ENCODE measurements at regions of chr17 and their contacts with region 1.

Region 1: DNA sequence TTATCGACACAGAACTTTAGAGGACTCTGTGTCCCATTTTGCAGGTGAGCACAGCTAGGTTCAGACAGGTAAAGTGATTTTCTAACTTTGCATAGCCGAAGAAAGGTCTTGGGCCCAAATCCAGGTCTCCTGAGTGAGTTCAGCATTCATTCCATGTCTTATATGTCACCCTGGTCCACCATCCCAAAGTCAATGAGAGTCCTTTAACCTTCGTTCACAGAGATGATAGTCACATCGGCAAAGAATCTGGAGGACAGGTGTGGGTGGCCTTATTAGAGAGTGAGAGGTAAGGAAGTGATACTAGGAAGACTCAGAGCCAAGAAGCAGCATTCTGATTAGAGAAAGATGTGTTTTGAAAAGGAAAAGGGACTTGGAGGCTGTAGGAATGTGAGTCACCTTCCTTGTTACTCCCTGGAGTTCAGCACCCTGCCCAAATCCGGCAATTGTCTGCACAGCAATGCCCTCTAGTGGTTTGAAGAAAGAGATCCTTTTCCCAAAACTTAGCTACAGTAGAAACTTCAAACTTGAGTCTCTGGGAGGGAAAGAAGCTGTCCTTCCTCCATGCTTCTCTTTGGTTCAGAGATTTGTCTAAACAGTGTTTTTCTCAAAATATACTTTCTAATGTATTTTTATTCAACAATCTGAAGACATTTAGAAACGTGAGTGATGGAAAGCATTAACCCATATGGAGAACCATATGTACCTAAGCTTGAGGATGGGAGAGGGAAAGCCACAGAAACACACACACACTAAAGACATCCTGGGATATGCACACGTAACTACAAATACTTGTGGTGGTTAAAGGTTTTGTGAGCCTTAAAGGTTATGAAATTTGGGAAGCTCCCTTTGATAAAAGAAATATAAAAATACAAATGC is 96.4 kb upstream of the SHISA6 start:
- DNase-seq: peak; percentile 67
- H3K4me3 ChIP-seq: no peak overlapping the region
- H3K27ac ChIP-seq: no peak overlapping the region
- H3K4me1 ChIP-seq: no peaks in the 10 kb centered on the region
- H3K27me3 ChIP-seq: no peaks in the 10 kb centered on the region
- CTCF ChIP-seq: peak; percentile 66 to 75 (median 68)
- EP300 ChIP-seq: no peak
- POLR2A ChIP-seq: no peak

Region 2: DNA sequence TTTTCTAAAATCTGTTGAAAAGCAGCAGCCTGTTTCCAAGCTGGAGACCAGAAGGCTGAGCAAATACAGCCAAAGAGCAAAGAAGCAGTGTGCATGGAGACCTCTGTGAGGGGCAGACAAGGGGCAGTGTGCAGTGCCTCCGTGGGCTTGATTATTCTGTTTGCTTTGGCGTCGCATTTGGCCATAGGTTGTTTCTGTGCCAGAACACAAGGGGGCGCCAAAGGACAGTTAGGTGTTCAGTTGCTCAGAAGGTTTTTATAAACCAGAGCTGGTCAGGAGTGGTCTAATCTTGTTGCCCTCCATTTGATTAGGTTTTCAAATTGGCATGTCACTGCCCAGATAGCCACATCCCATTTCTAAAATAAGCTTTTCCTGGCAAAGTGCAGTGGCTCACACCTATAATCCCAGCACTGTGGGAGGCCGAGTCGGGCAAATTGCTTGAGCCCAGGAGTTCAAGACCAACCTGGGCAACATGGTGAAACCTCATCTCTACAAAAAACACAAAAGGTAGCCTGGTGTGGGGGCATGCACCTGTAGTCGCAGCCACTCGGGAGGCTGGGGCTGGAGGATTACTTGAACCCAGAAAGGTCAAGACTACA is 498.1 kb before region 1 on chr17:
- in situ Hi-C with region 1: loop called in 1 of 4 experiments (anchors 25 kb)
- intact Hi-C with region 1: no loop called
- DNase-seq: peak; percentile 69
- H3K4me3 ChIP-seq: no peak overlapping the region
- H3K27ac ChIP-seq: no peak overlapping the region
- H3K4me1 ChIP-seq: no peaks in the 10 kb centered on the region
- H3K27me3 ChIP-seq: no peaks in the 10 kb centered on the region
- CTCF ChIP-seq: peak; percentile 73 to 87 (median 85)
- EP300 ChIP-seq: no peak
- POLR2A ChIP-seq: no peak

Region 3: DNA sequence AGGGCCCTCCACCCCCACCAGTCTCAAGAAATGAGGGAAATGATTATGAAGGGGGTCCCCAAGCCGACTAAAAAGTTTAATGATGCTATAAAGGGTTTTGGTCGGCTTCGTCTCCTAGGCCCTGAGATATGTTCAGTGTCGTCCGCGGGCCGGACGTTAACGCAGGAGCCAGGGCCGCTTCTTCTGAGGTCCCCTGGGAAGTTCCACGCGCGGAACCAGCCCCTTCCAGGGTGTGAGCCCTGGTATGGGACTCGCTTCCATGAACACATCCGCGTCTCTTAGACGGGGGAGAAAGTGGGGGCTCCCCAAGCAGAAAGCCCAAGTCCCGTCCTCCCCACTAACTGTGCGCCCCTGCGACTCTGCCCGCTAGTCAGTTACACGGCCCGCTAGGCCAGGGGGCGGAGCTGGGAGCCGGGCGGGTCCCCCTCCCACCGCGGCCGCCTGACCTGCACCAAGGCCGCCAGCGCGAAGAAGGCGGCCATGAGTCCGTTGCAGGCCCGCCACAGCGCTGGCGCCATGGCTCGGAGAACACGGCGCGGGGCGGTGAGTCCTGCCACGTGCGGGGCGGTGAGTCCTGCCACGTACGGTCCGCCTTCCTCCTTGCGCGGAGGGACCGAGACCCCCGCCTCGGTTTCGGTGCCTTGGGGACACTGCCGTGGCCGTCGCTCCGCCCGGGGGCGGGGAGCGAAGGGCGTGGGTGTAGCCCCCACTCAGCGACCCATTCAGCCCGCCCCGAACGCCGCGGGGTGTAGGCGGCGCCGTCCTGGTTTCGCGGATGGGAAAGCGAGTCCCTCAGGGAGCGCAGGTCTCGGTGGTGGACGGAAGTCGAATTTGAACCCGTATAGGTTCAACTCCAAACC is 415.0 kb before region 1 on chr17 and contains the start of gene TMEM220:
- in situ Hi-C with region 1: loop called in 1 of 4 experiments (anchors 10 kb)
- intact Hi-C with region 1: no loop called
- DNase-seq: peak; percentile 79
- H3K4me3 ChIP-seq: peak within 1 kb of the TSS; percentile 55 to 72 (median 64)
- H3K27ac ChIP-seq: peak within 1 kb of the TSS; percentile 89 to 94 (median 92)
- H3K4me1 ChIP-seq: peaks cover 0 to 45% (median 17%) of the 10 kb centered on the region in 4 donors
- H3K27me3 ChIP-seq: no peaks in the 10 kb centered on the region
- CTCF ChIP-seq: no peak
- EP300 ChIP-seq: no peak
- POLR2A ChIP-seq: peak; percentile 77
- total RNA-seq, gene TMEM220: 2.4 to 18.2 (median 8.1) TPM in 3 of 4 donors, not detected in the other

Region 4: DNA sequence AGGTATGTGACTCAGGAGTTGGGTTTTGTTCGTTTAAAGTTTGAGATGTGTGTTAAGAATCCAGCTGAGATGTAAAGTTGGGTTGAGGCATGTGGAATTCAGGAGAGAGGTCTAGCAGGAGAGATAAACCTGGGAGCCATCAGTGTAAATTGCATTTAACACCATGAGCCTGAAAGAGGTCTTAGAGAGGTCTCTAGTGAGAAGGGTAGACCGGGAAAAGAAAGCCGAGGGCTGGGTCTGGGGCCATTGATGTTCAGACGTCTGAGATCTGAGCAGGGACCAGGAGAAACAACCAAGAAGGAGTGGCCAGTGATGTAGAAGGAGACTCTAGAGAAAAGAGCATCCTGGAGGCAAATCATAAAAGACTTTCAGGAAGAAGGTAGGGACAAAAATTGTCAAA is 262.6 kb before region 1 on chr17:
- in situ Hi-C with region 1: loop called (anchors 5 to 10 kb)
- intact Hi-C with region 1: loop called (anchors 10 kb)
- DNase-seq: no peak
- H3K4me3 ChIP-seq: no peak overlapping the region
- H3K27ac ChIP-seq: no peak overlapping the region
- H3K4me1 ChIP-seq: peaks cover 0 to 3% (median 0%) of the 10 kb centered on the region in 4 donors
- H3K27me3 ChIP-seq: peaks cover 2% of the 10 kb centered on the region
- CTCF ChIP-seq: no peak
- EP300 ChIP-seq: no peak
- POLR2A ChIP-seq: no peak

Region 5: GRCh38 chr17:10888858-10889257 is 255.7 kb before region 1 on chr17:
- in situ Hi-C with region 1: loop called in 2 of 4 experiments (anchors 5 to 10 kb)
- intact Hi-C with region 1: no loop called
- DNase-seq: no peak
- H3K4me3 ChIP-seq: no peak overlapping the region
- H3K27ac ChIP-seq: no peak overlapping the region
- H3K4me1 ChIP-seq: no peaks in the 10 kb centered on the region
- H3K27me3 ChIP-seq: no peaks in the 10 kb centered on the region
- CTCF ChIP-seq: no peak
- EP300 ChIP-seq: no peak
- POLR2A ChIP-seq: no peak

Region 6: DNA sequence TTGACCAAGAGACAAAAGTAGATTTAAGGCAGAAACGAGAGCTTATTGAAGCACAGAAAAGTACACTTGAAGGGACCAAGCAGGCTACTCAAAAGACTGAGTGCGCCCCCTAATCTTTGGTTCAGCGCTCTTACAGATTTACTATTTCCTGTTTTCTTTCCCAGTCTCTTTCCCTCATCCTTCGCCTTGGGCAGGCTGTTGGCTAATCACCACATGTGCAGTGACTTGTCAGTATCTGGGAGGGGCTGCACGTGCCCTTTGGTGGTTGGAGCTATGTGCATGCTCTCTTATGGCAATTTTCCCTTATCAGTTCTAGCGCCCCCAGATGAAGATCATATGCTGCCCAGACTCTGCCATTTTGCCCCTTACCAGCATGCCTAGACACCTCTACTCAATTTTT is 61.1 kb after region 1 on chr17:
- in situ Hi-C with region 1: loop called in 1 of 4 experiments (anchors 10 kb)
- intact Hi-C with region 1: no loop called
- DNase-seq: no peak
- H3K4me3 ChIP-seq: no peak overlapping the region
- H3K27ac ChIP-seq: no peak overlapping the region
- H3K4me1 ChIP-seq: no peaks in the 10 kb centered on the region
- H3K27me3 ChIP-seq: no peaks in the 10 kb centered on the region
- CTCF ChIP-seq: no peak
- EP300 ChIP-seq: no peak
- POLR2A ChIP-seq: no peak

Measured in transverse colon (tissue), 4 donors.